CD4-positive, alpha-beta memory T cell (primary cell): ENCODE measurements at regions of chr2 and their contacts with region 1.

Region 1: GRCh38 chr2:198296665-198297308 is 492.4 kb downstream of the PLCL1 start:
- DNase-seq: peak; percentile 48 to 57 (median 55)
- H3K4me3 ChIP-seq: no peak overlapping the region
- H3K4me3 Mint-ChIP-seq: no peak overlapping the region
- H3K27ac ChIP-seq: no peak overlapping the region
- H3K27ac Mint-ChIP-seq: no peak overlapping the region
- H3K4me1 ChIP-seq: no peaks in the 10 kb centered on the region
- H3K4me1 Mint-ChIP-seq: peaks cover 0 to 2% (median under 1%) of the 10 kb centered on the region in 4 donors
- H3K27me3 ChIP-seq: peaks cover 3% of the 10 kb centered on the region
- H3K27me3 Mint-ChIP-seq: peaks cover 7 to 19% of the 10 kb centered on the region in 2 donors

Region 2: DNA sequence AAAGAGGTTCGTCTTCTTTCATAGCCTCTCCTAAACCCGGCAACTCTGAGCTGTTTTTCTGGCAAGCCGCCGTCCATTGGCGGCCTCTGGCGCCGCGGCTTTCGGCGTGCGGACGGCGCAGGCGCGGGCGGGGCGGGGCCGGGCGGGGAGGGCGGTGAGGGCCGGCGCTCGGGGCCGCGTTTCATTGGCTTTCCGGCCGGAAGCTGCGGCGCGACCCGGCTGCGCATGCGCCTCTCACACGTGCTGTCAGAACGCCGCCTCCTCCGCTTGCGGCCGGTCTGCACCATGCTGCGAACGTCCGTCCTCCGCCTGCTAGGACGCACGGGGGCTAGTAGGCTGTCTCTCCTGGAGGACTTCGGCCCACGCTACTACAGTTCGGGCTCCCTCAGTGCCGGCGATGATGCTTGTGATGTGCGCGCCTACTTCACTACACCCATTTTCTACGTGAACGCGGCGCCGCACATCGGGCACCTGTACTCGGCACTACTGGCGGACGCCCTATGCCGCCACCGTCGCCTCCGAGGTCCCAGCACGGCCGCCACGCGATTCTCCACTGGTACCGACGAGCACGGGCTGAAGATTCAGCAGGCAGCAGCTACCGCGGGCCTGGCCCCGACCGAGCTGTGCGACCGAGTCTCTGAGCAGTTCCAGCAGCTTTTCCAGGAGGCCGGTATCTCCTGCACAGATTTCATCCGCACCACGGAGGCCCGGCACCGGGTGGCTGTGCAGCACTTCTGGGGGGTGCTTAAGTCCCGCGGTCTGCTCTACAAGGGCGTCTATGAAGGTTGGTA is 591.5 kb before region 1 on chr2 and contains the start of gene MARS2:
- CTCF ChIA-PET with region 1: interaction called, 10 read pairs
- POLR2A ChIA-PET with region 1: no interaction called
- intact Hi-C with region 1: loop called (anchors 1 kb)
- DNase-seq: peak; percentile 91 to 94 (median 92)
- H3K4me3 ChIP-seq: peak within 1 kb of the TSS; percentile 89 to 93
- H3K4me3 Mint-ChIP-seq: peak within 1 kb of the TSS; percentile 84 to 94 (median 90)
- H3K27ac ChIP-seq: peak within 1 kb of the TSS; percentile 77
- H3K27ac Mint-ChIP-seq: peak within 1 kb of the TSS; percentile 84 to 98 (median 95)
- H3K4me1 ChIP-seq: peaks cover 51% of the 10 kb centered on the region
- H3K4me1 Mint-ChIP-seq: peaks cover 23 to 54% (median 41%) of the 10 kb centered on the region in 4 donors
- H3K27me3 ChIP-seq: no peaks in the 10 kb centered on the region
- H3K27me3 Mint-ChIP-seq: peaks cover 3 to 5% of the 10 kb centered on the region in 2 donors
- total RNA-seq, gene MARS2: 12.1 to 12.3 TPM

Region 3: DNA sequence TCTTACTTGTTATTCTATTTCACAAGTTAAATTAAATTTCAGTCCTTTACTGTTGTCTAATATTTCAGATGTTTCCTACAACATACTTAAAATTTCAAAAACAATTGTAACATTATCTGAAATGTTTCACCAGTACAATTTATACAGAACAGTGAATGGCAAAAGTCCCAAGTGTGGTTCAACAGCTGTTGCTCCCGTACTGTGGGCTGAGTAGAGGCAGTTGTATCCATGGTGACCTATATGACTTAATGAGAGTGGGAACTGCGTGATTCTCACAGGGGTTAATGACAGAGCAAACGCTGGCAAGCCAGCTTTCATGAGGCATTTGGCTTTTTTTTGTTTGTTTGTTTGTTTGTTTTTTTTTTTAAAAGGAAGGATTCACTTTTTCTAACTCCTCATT is 497.7 kb before region 1 on chr2:
- CTCF ChIA-PET with region 1: interaction called, 30 read pairs
- POLR2A ChIA-PET with region 1: interaction called, 5 read pairs
- intact Hi-C with region 1: loop called (anchors 1 kb)
- DNase-seq: no peak
- H3K4me3 ChIP-seq: no peak overlapping the region
- H3K4me3 Mint-ChIP-seq: no peak overlapping the region
- H3K27ac ChIP-seq: no peak overlapping the region
- H3K27ac Mint-ChIP-seq: no peak overlapping the region
- H3K4me1 ChIP-seq: peaks cover 10% of the 10 kb centered on the region
- H3K4me1 Mint-ChIP-seq: peaks cover 5 to 11% (median 9%) of the 10 kb centered on the region in 4 donors
- H3K27me3 ChIP-seq: no peaks in the 10 kb centered on the region
- H3K27me3 Mint-ChIP-seq: peaks cover 1 to 9% of the 10 kb centered on the region in 2 donors

Region 4: DNA sequence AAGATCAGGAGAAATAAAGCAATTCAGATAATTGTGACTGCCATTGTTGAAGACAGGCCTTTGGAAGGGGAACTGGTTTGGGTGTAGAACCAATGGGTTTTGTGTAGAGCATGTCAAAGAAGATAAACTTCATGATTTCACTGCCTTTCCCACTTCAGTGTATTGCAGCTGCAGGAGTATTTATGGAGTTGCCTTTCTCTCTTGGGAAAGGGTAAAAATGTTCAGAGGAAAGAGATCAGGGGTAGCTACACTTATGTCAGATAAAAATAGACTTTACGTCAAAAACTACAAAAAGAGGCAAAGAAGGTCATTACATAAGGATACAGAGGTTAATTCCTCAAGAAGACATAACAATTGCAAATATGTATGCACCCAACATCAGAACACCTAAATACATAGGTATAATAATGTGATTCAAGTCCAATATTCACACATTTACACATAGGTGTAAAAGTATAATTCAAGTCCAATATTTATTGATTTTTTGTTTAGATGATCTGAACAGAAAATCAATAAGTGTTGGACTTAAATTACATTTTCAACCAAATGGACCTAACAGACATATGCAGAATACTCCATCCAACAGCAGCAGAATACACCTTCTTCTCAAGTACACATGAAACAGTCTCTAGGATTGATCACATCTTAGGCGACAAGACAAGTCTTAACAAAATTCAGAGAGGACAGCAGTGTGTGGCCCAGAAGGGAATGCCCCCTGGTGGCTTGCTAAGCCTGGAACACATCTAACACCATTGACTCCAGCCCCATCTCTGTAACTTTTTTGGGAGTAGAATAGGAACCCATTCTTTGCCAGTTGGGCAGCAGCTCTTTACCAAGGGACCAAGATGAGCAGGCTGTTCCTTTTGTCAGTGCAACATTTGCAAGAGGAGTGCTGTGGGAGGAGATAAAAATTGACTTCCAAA is 242.8 kb before region 1 on chr2:
- CTCF ChIA-PET with region 1: interaction called, 7 read pairs
- POLR2A ChIA-PET with region 1: no interaction called
- intact Hi-C with region 1: loop called (anchors 5 kb)
- DNase-seq: peak; percentile 30 to 46 (median 35)
- H3K4me3 ChIP-seq: no peak overlapping the region
- H3K4me3 Mint-ChIP-seq: no peak overlapping the region
- H3K27ac ChIP-seq: no peak overlapping the region
- H3K27ac Mint-ChIP-seq: peak overlapping the region in 1 of 7 donors; percentile 16
- H3K4me1 ChIP-seq: no peaks in the 10 kb centered on the region
- H3K4me1 Mint-ChIP-seq: peaks cover 0 to 17% (median 14%) of the 10 kb centered on the region in 4 donors
- H3K27me3 ChIP-seq: no peaks in the 10 kb centered on the region
- H3K27me3 Mint-ChIP-seq: no peaks in the 10 kb centered on the region

Region 5: GRCh38 chr2:198188982-198189381 is 107.8 kb before region 1 on chr2:
- CTCF ChIA-PET with region 1: no interaction called
- POLR2A ChIA-PET with region 1: no interaction called
- intact Hi-C with region 1: no loop called
- DNase-seq: no peak
- H3K4me3 ChIP-seq: no peak overlapping the region
- H3K4me3 Mint-ChIP-seq: no peak overlapping the region
- H3K27ac ChIP-seq: no peak overlapping the region
- H3K27ac Mint-ChIP-seq: no peak overlapping the region
- H3K4me1 ChIP-seq: no peaks in the 10 kb centered on the region
- H3K4me1 Mint-ChIP-seq: no peaks in the 10 kb centered on the region
- H3K27me3 ChIP-seq: no peaks in the 10 kb centered on the region
- H3K27me3 Mint-ChIP-seq: peaks cover 0 to 4% of the 10 kb centered on the region in 2 donors

Region 6: DNA sequence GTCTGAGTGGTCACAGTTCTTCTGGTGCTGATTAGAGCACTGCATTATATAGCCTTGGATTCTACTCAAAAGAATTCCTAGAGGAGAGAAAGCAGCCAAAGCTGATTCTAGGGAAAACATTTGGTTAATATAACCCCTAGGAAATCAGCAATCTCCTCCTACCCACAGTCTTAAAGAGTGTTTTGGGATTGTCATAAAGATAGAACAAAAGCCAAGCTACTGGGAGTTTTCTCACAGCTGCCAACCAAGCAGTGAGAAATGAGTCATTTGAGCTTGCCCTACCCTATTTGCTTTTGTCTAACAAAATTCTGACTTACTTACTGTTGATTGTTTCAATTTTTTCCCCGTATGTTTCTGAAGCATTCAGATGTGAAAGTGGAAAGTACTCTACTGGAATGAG is 23.1 kb before region 1 on chr2:
- CTCF ChIA-PET with region 1: interaction called, 11 read pairs
- POLR2A ChIA-PET with region 1: no interaction called
- intact Hi-C with region 1: no loop called
- DNase-seq: no peak
- H3K4me3 ChIP-seq: no peak overlapping the region
- H3K4me3 Mint-ChIP-seq: no peak overlapping the region
- H3K27ac ChIP-seq: no peak overlapping the region
- H3K27ac Mint-ChIP-seq: no peak overlapping the region
- H3K4me1 ChIP-seq: no peaks in the 10 kb centered on the region
- H3K4me1 Mint-ChIP-seq: no peaks in the 10 kb centered on the region
- H3K27me3 ChIP-seq: no peaks in the 10 kb centered on the region
- H3K27me3 Mint-ChIP-seq: peaks cover 2 to 9% of the 10 kb centered on the region in 2 donors

Region 7: GRCh38 chr2:198309673-198310280 is 13.0 kb after region 1 on chr2:
- CTCF ChIA-PET with region 1: interaction called, 52 read pairs
- POLR2A ChIA-PET with region 1: no interaction called
- intact Hi-C with region 1: no loop called
- DNase-seq: peak in 4 of 5 donors; percentile 45 to 58 (median 53)
- H3K4me3 ChIP-seq: no peak overlapping the region
- H3K4me3 Mint-ChIP-seq: no peak overlapping the region
- H3K27ac ChIP-seq: no peak overlapping the region
- H3K27ac Mint-ChIP-seq: no peak overlapping the region
- H3K4me1 ChIP-seq: no peaks in the 10 kb centered on the region
- H3K4me1 Mint-ChIP-seq: peaks cover 0 to 4% (median 0%) of the 10 kb centered on the region in 4 donors
- H3K27me3 ChIP-seq: peaks cover 4% of the 10 kb centered on the region
- H3K27me3 Mint-ChIP-seq: peaks cover 13 to 17% of the 10 kb centered on the region in 2 donors